Activated T-helper 2 cell treated with anti-CD3 and anti-CD28 coated beads, Interferon-gamma antibody, Interleukin-2, Interleukin-4, amounts not matched to agents 10 μg/mL and 5 μg/mL and 100 μg/mL, durations not matched to agents 14 hours and 24 hours and 36 hours (primary cell): ENCODE measurements at regions of chr11 and their contacts with region 1.

Region 1: GRCh38 chr11:60204922-60205321 is 22.0 kb upstream of the MS4A6A start:
- DNase-seq: no peak
- H3K4me3 Mint-ChIP-seq: no peak overlapping the region
- H3K27ac Mint-ChIP-seq: no peak overlapping the region
- H3K4me1 Mint-ChIP-seq: peaks cover 13% of the 10 kb centered on the region
- H3K27me3 Mint-ChIP-seq: peaks cover 8% of the 10 kb centered on the region

Region 2: DNA sequence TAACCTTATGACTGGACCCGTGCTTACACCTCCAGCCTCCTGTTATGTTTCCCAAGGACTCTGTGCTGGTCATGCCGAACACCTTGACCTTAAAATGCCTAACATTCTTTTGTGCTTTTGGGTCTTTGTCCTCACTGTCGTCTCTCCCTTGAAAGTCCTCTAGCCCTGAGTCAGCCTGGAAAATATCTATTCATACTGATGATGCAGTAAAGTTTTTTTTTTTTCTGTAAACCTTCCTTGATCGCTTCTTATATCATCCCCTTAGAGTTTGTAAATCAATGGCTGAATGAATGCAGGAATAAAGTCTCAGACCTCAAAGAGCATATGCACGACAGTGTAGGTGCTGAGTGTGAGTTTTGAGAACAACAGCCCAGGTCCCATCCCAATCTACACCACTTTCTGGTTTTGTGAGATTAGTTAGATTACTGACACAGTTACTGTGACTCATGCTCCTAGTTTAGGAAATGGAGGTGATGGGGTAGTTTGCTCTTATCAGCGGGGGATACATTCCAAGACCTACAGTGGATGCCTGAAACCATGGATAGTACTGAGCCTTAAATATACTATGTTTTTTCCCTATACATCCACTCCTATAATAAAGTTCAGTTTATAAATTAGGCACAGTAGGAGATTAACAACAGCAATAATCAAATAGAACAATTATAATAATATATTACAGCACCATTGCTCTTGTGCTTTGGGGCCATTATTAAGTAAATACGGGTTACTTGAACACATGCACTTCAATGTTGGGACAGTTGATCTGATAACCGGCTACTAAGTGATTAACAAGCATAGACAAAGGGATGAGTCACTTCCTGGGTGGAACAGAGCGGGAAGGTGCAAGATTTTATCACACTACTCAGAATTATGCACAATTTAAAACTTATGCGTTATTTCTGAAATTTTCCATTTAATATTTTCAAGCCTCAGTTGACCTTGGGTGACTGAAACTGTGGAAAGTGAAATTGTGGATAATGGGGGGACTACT is 347.2 kb before region 1 on chr11:
- intact Hi-C with region 1: loop called (anchors 5 kb)
- DNase-seq: peak; percentile 11
- H3K4me3 Mint-ChIP-seq: peak overlapping the region; percentile 19
- H3K27ac Mint-ChIP-seq: peak overlapping the region; percentile 95
- H3K4me1 Mint-ChIP-seq: peaks cover 41% of the 10 kb centered on the region
- H3K27me3 Mint-ChIP-seq: no peaks in the 10 kb centered on the region

Region 3: GRCh38 chr11:60221181-60221580 is 16.3 kb after region 1 on chr11:
- intact Hi-C with region 1: no loop called
- DNase-seq: no peak
- H3K4me3 Mint-ChIP-seq: no peak overlapping the region
- H3K27ac Mint-ChIP-seq: no peak overlapping the region
- H3K4me1 Mint-ChIP-seq: no peaks in the 10 kb centered on the region
- H3K27me3 Mint-ChIP-seq: no peaks in the 10 kb centered on the region

Region 4: GRCh38 chr11:60305906-60306619 is 101.1 kb after region 1 on chr11:
- intact Hi-C with region 1: loop called (anchors 5 kb)
- DNase-seq: no peak
- H3K4me3 Mint-ChIP-seq: no peak overlapping the region
- H3K27ac Mint-ChIP-seq: no peak overlapping the region
- H3K4me1 Mint-ChIP-seq: peaks cover 5% of the 10 kb centered on the region
- H3K27me3 Mint-ChIP-seq: peaks cover 6% of the 10 kb centered on the region